ENCODE measurements at regions of chr12 and their contacts with region 1.

Region 1: GRCh38 chr12:3872800-3873636 is at the start of gene PARP11:
- DNase-seq: peak; percentile 99
- ATAC-seq: peak; percentile 93
- H3K4me3 Mint-ChIP-seq: peak within 1 kb of the TSS; percentile 96
- H3K27ac Mint-ChIP-seq: peak within 1 kb of the TSS; percentile 98
- H3K4me1 Mint-ChIP-seq: peaks cover 46% of the 10 kb centered on the region
- H3K27me3 Mint-ChIP-seq: no peaks in the 10 kb centered on the region
- total RNA-seq, gene PARP11: 20.9 to 23.0 TPM

Region 2: DNA sequence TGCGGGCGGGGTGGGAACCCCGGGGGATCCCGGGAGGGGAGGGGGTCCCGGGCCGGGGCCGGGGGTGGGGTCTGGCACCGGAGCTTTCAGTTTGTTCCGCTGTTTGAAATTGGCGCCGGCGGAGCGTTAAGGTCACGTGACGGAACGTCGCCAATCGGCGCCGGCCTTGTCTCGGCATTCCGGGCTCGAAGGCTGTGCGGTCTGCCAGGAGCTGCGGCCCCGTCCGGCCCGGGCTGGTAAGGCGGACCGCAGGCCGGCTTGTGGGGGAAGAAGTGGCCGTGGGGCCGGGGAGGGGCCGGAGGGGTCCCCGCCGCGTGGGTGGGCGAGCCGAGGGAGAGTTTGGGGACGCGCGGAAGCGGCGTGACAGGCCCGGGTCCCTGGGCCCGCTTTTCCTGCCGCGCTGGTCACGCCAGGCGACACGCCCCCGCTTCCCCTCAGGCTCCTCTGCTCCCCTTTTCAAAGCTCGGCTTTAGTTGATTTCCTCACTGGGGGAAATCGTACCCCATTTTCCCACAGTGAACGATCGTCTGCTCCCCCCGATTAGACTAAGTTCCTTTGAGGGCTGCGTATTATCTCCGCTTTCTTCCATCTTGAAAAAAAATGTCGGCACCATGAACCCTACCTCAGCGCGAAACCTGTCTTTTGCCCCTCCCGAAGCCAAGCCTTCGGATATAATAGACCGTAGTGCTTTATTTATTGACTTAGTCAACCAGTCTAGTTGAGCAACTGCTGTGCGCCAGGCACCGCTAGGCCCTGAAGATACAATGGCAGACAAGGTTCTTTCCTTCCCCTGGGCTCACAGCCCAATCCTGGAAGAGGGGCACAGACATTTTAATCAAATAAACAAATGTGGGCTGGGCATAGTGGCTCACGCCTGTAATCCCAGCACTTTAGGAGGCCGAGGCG is 995.7 kb before region 1 on chr12 and contains the starts of genes FOXM1 and RHNO1:
- CTCF ChIA-PET with region 1: no interaction called
- POLR2A ChIA-PET with region 1: no interaction called
- intact Hi-C with region 1: loop called in 1 of 2 experiments (anchors 5 kb)
- DNase-seq: peak; percentile 92
- ATAC-seq: peak; percentile 77
- H3K4me3 Mint-ChIP-seq: peak within 1 kb of the TSS; percentile 99
- H3K27ac Mint-ChIP-seq: peak within 1 kb of the TSS; percentile 99
- H3K4me1 Mint-ChIP-seq: peaks cover 31% of the 10 kb centered on the region
- H3K27me3 Mint-ChIP-seq: no peaks in the 10 kb centered on the region
- total RNA-seq, gene FOXM1: 74.5 to 92.3 TPM
- total RNA-seq, gene RHNO1: 61.1 to 91.4 TPM

Region 3: DNA sequence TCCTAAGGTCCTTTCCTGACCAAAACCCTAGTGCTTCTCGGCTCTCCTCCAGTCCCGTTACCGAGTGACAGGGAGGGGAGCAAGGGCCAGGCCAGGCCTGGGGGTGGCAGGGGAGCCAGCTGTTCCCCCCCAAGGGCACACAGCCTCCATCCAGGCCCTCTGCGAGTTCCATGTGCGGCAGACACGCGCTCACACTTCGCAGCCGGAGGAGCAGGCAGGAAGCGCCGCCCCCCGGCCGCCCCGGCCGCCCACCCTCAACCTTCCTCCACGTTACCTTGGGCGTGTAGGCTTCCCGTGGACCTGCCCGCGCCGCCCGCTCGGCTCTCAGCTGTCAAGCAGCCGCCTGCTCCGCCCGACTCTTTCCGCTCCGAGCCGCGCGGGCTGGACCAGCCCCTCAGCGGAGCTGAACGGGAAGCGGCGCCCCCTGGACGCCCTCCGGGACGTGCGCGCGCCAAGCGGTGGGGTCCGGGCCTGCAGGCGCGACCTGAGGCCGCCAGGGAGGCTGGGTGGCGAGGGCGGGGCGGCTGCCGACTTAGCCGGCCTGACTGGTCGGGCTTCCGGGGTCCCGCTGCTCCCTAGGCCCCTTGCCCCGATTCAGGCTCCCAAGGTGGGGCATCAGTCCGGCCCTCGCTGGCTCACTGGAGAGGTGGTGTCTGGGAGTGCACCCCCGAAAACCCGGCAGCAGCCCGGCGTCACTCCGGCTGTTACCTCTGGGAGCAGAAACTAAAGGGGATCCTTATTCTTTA is 120.1 kb before region 1 on chr12 and contains the start of gene CRACR2A:
- CTCF ChIA-PET with region 1: no interaction called
- POLR2A ChIA-PET with region 1: no interaction called
- intact Hi-C with region 1: loop called (anchors 2 to 5 kb)
- DNase-seq: peak; percentile 92
- ATAC-seq: peak; percentile 84
- H3K4me3 Mint-ChIP-seq: peak within 1 kb of the TSS; percentile 86
- H3K27ac Mint-ChIP-seq: peak within 1 kb of the TSS; percentile 96
- H3K4me1 Mint-ChIP-seq: peaks cover 52% of the 10 kb centered on the region
- H3K27me3 Mint-ChIP-seq: no peaks in the 10 kb centered on the region
- total RNA-seq, gene CRACR2A: 19.2 to 22.5 TPM

Region 4: GRCh38 chr12:4030929-4031702 is 158.1 kb after region 1 on chr12:
- CTCF ChIA-PET with region 1: no interaction called
- POLR2A ChIA-PET with region 1: no interaction called
- intact Hi-C with region 1: loop called in 1 of 2 experiments (anchors 1 kb)
- DNase-seq: peak; percentile 84
- ATAC-seq: peak; percentile 94
- H3K4me3 Mint-ChIP-seq: peak overlapping the region; percentile 55
- H3K27ac Mint-ChIP-seq: peak overlapping the region; percentile 77
- H3K4me1 Mint-ChIP-seq: peaks cover 33% of the 10 kb centered on the region
- H3K27me3 Mint-ChIP-seq: no peaks in the 10 kb centered on the region

Region 5: DNA sequence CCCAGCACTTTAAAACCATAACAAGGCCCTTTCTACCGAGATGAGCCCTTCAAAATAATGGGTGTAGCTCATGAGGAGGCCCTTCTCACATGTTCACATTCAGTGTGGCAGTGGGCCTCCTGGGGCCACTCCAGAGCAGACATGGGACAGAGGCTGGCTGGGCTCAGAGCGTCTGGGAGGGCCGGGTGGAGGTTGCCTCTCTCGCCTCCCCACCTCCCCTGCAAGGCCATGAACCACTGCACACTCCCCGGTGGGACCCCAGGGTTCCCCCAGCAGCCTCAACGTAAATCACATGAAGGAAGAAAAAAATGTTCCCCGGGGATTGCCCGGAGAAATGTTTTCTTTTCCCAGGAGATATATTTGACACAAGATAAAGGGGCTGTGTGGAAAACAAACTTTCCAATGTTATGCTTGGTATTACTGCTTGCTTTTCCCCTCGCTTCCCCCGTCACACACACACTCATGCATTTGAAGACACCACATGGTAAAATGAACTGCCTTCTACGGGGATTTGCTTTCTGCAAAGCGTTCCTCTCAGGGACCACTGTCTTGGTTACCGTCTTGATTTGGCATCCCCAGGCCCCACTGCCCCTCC is 209.9 kb after region 1 on chr12:
- CTCF ChIA-PET with region 1: no interaction called
- POLR2A ChIA-PET with region 1: no interaction called
- intact Hi-C with region 1: no loop called
- DNase-seq: no peak
- ATAC-seq: no peak
- H3K4me3 Mint-ChIP-seq: no peak overlapping the region
- H3K27ac Mint-ChIP-seq: no peak overlapping the region
- H3K4me1 Mint-ChIP-seq: peaks cover 7% of the 10 kb centered on the region
- H3K27me3 Mint-ChIP-seq: no peaks in the 10 kb centered on the region

Region 6: GRCh38 chr12:4148418-4149056 is 275.5 kb after region 1 on chr12:
- CTCF ChIA-PET with region 1: no interaction called
- POLR2A ChIA-PET with region 1: no interaction called
- intact Hi-C with region 1: loop called in 1 of 2 experiments (anchors 1 kb)
- DNase-seq: peak; percentile 75
- ATAC-seq: no peak
- H3K4me3 Mint-ChIP-seq: no peak overlapping the region
- H3K27ac Mint-ChIP-seq: peak overlapping the region; percentile 94
- H3K4me1 Mint-ChIP-seq: peaks cover 87% of the 10 kb centered on the region
- H3K27me3 Mint-ChIP-seq: no peaks in the 10 kb centered on the region

Region 7: GRCh38 chr12:4320853-4321701 is 448.1 kb after region 1 on chr12 and contains the start of gene TIGAR:
- CTCF ChIA-PET with region 1: no interaction called
- POLR2A ChIA-PET with region 1: no interaction called
- intact Hi-C with region 1: loop called (anchors 1 kb)
- DNase-seq: peak; percentile 96
- ATAC-seq: peak; percentile 99
- H3K4me3 Mint-ChIP-seq: peak within 1 kb of the TSS; percentile 89
- H3K27ac Mint-ChIP-seq: peak within 1 kb of the TSS; percentile 85
- H3K4me1 Mint-ChIP-seq: peaks cover 33% of the 10 kb centered on the region
- H3K27me3 Mint-ChIP-seq: no peaks in the 10 kb centered on the region
- total RNA-seq, gene TIGAR: 7.1 to 8.4 TPM

Region 8: GRCh38 chr12:4538207-4539160 is 665.5 kb after region 1 on chr12 and contains the start of gene RAD51AP1:
- CTCF ChIA-PET with region 1: no interaction called
- POLR2A ChIA-PET with region 1: no interaction called
- intact Hi-C with region 1: loop called (anchors 1 to 2 kb)
- DNase-seq: peak; percentile 97
- ATAC-seq: peak; percentile 97
- H3K4me3 Mint-ChIP-seq: peak within 1 kb of the TSS; percentile 91
- H3K27ac Mint-ChIP-seq: peak within 1 kb of the TSS; percentile 96
- H3K4me1 Mint-ChIP-seq: peaks cover 26% of the 10 kb centered on the region
- H3K27me3 Mint-ChIP-seq: no peaks in the 10 kb centered on the region
- total RNA-seq, gene RAD51AP1: 44.6 to 50.9 TPM